ENCODE measurements at regions of chr7 and their contacts with region 1.

Region 1: DNA sequence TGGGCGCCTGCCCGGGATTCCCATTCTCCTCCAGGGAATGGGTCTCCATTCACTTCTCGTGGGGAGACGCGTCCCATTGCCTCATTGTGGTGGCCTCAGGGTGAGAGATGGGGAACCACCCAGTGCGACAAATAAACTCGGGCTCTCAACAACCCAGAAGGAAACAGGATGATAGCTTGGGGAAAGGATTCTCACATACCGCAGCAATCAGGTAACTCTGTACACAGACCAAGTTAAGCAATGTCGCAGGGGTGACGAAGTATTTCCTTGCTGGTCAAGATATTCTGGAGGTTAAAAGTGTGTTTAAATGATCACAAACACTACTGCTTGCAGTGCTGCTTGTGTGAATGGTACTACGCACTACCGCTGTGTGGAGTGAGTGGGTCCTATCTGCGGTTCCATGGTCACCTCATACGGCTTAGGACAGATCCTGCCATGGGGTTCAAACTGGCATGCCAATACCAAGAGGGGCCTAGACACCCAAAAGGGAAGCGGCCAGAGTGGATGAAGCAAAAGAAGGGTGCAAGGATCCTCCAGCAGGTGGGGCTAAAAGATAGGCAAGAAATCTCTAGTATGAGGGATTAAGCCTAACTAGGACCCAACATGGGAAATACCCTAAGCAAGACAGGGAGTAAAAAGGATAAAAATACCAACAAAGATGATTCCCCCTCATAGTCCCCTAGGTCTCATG is 143.8 kb upstream of the TMEM106B start:
- DNase-seq: peak; percentile 71
- H3K4me3 Mint-ChIP-seq: no peak overlapping the region
- H3K27ac Mint-ChIP-seq: no peak overlapping the region
- H3K4me1 Mint-ChIP-seq: peaks cover 15% of the 10 kb centered on the region
- H3K27me3 Mint-ChIP-seq: no peaks in the 10 kb centered on the region

Region 2: GRCh38 chr7:11831736-11832495 is 235.4 kb before region 1 on chr7 and contains the start of gene THSD7A:
- CTCF ChIA-PET with region 1: no interaction called
- intact Hi-C with region 1: loop called (anchors 5 kb)
- DNase-seq: no peak
- H3K4me3 Mint-ChIP-seq: peak within 1 kb of the TSS; percentile 32
- H3K27ac Mint-ChIP-seq: no peak within 1 kb of the TSS
- H3K4me1 Mint-ChIP-seq: peaks cover 12% of the 10 kb centered on the region
- H3K27me3 Mint-ChIP-seq: peaks cover 47% of the 10 kb centered on the region
- total RNA-seq, gene THSD7A: not detected

Region 3: GRCh38 chr7:12174931-12175330 is 107.6 kb after region 1 on chr7:
- CTCF ChIA-PET with region 1: no interaction called
- intact Hi-C with region 1: no loop called
- DNase-seq: no peak
- H3K4me3 Mint-ChIP-seq: no peak overlapping the region
- H3K27ac Mint-ChIP-seq: no peak overlapping the region
- H3K4me1 Mint-ChIP-seq: peaks cover 17% of the 10 kb centered on the region
- H3K27me3 Mint-ChIP-seq: no peaks in the 10 kb centered on the region

Region 4: DNA sequence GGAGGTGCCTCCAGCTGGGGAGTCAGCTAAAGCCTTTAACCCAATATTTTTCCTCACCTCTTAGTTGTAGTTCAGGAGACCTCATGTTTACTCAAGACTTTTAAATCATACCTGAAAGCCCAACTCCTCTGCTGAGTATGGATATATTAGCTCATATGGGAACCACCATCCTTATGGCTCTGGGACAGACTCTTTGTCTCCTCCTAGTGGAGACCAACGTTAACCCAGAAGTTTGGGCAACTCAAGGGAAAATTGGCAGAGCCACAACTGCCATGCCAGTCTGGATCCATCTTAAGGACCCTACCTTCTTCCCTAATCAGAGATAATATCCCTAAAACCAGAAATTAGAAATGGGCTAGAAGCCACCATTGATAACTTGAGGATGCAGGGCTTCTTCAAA is 224.6 kb after region 1 on chr7:
- CTCF ChIA-PET with region 1: interaction called, 5 read pairs
- intact Hi-C with region 1: loop called (anchors 1 kb)
- DNase-seq: peak; percentile 17
- H3K4me3 Mint-ChIP-seq: no peak overlapping the region
- H3K27ac Mint-ChIP-seq: no peak overlapping the region
- H3K4me1 Mint-ChIP-seq: peaks cover 5% of the 10 kb centered on the region
- H3K27me3 Mint-ChIP-seq: peaks cover 5% of the 10 kb centered on the region

Region 5: GRCh38 chr7:12357508-12357907 is 290.2 kb after region 1 on chr7:
- CTCF ChIA-PET with region 1: no interaction called
- intact Hi-C with region 1: loop called (anchors 1 kb)
- DNase-seq: no peak
- H3K4me3 Mint-ChIP-seq: no peak overlapping the region
- H3K27ac Mint-ChIP-seq: no peak overlapping the region
- H3K4me1 Mint-ChIP-seq: no peaks in the 10 kb centered on the region
- H3K27me3 Mint-ChIP-seq: peaks cover 4% of the 10 kb centered on the region